ENCODE measurements at regions of chr20 and their contacts with region 1.

Region 1: DNA sequence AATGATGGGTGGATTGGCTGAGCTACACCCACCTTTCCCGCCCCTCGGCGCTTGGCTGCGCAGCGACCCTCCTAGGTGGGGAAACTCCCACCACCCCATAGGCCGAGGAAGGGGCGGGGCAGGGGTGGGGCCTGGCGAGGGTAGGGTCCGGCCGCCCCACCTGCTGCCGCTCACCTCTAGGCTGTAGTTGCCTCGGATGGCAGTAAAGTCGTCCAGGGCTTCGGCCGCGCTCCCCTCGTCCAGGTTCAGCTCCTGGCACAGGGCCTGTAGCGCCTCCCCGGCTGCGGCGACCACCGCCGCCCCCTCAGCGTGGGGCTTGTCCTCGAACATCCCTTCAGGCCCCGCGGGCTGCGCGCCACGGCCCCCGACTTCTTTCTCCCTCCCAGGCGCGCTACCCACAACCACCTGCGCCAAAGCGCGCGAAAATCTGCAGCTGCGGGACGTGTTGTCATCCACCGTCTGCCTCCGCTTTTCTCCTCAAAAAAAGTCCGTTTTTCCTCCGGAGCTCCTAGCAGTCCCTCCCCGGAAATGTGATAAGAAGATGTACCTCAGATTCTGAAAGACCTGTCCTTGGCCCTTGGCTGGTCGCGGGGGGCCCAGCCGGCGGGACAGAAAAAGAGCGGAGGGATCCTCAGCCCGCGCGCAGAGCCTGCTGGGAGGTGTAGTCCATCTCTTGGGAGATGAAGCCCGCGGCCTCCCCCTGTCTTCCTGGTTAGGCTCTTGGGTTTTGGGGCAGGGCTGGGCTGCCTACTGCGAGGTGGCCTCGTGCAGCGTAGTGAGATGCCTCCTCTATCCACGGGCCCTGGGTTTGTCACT is at the start of gene RBL1:
- DNase-seq: peak; percentile 79 to 95
- H3K4me3 ChIP-seq: peak within 1 kb of the TSS; percentile 60 to 75 (median 72)
- H3K27ac ChIP-seq: peak within 1 kb of the TSS; percentile 98
- H3K4me1 ChIP-seq: peaks cover 0 to 11% (median 5%) of the 10 kb centered on the region in 4 experiments; a peak in 4 of 7 replicates
- H3K27me3 ChIP-seq: no peaks in the 10 kb centered on the region
- CTCF ChIP-seq: peak in 2 of 3 experiments; percentile 23 to 41; a peak in 2 of 4 replicates
- EP300 ChIP-seq: no peak
- POLR2A ChIP-seq: peak; percentile 97
- RAD21 ChIP-seq: no peak
- total RNA-seq, gene RBL1: 12.3 and 13.3 TPM in 2 replicates

Region 2: DNA sequence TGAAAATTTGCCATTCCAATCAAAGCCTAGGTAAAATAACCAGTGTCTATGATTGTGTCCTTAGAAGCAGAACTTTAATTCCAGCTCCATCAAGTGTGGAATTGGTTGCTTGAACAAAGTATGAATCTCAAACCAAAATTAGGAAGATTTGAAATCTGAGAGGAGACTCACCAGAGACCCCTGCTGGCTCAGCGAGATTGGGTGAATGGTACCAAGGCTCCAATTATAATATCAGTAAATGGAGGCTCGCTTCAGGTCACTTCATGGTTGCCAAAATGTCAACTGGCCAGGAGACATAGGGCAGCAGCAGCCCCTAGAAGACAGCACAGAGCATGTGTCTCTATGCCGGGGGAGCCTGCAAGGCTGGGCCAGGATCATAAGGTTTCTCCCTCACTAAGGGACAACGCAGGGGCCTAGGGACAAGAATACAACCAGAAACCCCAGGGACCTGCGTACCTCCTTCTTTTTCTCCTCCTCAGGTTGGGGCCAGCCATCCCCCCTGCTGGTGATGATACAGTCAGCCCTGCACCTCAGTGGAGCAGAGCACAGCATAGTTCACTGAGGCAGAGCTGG is 14.0 kb before region 1 on chr20:
- CTCF ChIA-PET with region 1: interaction called, 6 read pairs
- POLR2A ChIA-PET with region 1: interaction called, 51 read pairs
- DNase-seq: no peak
- H3K4me3 ChIP-seq: no peak overlapping the region
- H3K27ac ChIP-seq: no peak overlapping the region
- H3K4me1 ChIP-seq: peaks cover 0 to 4% (median 0%) of the 10 kb centered on the region in 4 experiments; a peak in 1 of 7 replicates
- H3K27me3 ChIP-seq: no peaks in the 10 kb centered on the region
- CTCF ChIP-seq: peak in 2 of 3 experiments; percentile 5 to 30; a peak in 1 of 4 replicates
- EP300 ChIP-seq: no peak
- POLR2A ChIP-seq: no peak
- RAD21 ChIP-seq: peak in 1 of 2 experiments; percentile 15; a peak in 1 of 4 replicates

Region 3: GRCh38 chr20:37120497-37120896 is 24.7 kb after region 1 on chr20:
- CTCF ChIA-PET with region 1: no interaction called
- POLR2A ChIA-PET with region 1: interaction called, 10 read pairs
- DNase-seq: no peak
- H3K4me3 ChIP-seq: no peak overlapping the region
- H3K27ac ChIP-seq: no peak overlapping the region
- H3K4me1 ChIP-seq: no peaks in the 10 kb centered on the region
- H3K27me3 ChIP-seq: no peaks in the 10 kb centered on the region
- CTCF ChIP-seq: no peak
- EP300 ChIP-seq: no peak
- POLR2A ChIP-seq: no peak
- RAD21 ChIP-seq: no peak

Region 4: GRCh38 chr20:37178839-37179670 is 83.2 kb after region 1 on chr20 and contains the starts of genes MROH8 and RPN2:
- CTCF ChIA-PET with region 1: interaction called, 3 read pairs
- POLR2A ChIA-PET with region 1: interaction called, 34 read pairs
- DNase-seq: peak; percentile 91 to 95
- H3K4me3 ChIP-seq: peak within 1 kb of the TSS; percentile 80 to 97 (median 92)
- H3K27ac ChIP-seq: peak within 1 kb of the TSS; percentile 98
- H3K4me1 ChIP-seq: peaks cover 0 to 8% (median 4%) of the 10 kb centered on the region in 4 experiments; a peak in 5 of 7 replicates
- H3K27me3 ChIP-seq: no peaks in the 10 kb centered on the region
- CTCF ChIP-seq: no peak
- EP300 ChIP-seq: peak in 1 of 2 experiments; percentile 94; a peak in 1 of 3 replicates
- POLR2A ChIP-seq: peak; percentile 66 to 72
- RAD21 ChIP-seq: no peak
- total RNA-seq, gene MROH8: 0.48 and 0.50 TPM in 2 replicates
- total RNA-seq, gene RPN2: 226 and 236 TPM in 2 replicates

Measured in H1 (cell line).